ENCODE measurements at regions of chr3 and their contacts with region 1.

Region 1: DNA sequence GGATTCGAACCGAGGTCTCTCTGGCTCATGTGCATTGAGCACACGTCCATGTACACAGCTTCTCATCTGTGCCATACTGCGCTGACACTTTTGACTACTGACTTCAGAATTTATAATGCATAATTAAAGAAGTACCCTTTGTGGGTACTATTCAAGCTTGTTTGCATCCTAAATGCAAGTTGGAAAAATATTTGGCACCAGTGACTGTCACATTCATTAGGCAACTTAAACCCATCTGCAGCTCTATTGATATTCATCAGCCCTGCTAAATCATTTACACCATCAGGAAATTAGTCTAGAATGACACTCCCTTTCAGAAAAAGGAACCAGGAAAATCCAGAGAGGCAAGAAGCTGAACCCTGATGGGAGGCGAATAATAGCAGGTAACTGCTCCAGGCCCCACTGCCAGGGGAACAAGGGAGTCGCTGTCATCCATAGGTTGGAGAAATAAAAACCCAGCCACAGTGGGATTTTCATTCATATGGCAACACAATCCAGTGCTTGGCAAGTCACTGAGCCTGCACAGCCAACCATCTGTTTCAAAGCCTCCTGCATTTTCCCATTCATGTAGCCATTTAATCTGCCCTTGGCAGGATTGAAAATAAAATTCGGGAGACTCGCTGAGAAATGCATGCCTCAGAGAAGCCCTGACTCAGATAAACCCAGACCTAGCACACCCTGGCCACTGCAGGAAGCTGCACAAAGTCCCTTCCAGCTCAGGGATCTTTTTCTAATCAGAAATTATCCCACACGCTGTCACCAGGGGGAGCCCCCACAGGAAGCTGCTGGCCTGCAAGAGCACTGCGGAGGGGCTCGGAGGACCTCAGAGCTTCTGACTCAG is 103.0 kb upstream of the VEPH1 start:
- ATAC-seq: peak; percentile 95 to 99 (median 97)
- H3K4me3 ChIP-seq: no peak overlapping the region
- H3K27ac ChIP-seq: peak overlapping the region in 1 of 2 donors; percentile 2
- H3K4me1 ChIP-seq: peaks cover 0 to 2% of the 10 kb centered on the region in 2 donors

Region 2: GRCh38 chr3:157913741-157914150 is 307.5 kb after region 1 on chr3:
- in situ Hi-C with region 1: loop called in 2 of 9 experiments (anchors 25 kb)
- ATAC-seq: peak in 2 of 8 experiments; percentile 6 to 38
- H3K4me3 ChIP-seq: no peak overlapping the region
- H3K27ac ChIP-seq: no peak overlapping the region
- H3K4me1 ChIP-seq: peaks cover 20 to 29% of the 10 kb centered on the region in 2 donors

Region 3: DNA sequence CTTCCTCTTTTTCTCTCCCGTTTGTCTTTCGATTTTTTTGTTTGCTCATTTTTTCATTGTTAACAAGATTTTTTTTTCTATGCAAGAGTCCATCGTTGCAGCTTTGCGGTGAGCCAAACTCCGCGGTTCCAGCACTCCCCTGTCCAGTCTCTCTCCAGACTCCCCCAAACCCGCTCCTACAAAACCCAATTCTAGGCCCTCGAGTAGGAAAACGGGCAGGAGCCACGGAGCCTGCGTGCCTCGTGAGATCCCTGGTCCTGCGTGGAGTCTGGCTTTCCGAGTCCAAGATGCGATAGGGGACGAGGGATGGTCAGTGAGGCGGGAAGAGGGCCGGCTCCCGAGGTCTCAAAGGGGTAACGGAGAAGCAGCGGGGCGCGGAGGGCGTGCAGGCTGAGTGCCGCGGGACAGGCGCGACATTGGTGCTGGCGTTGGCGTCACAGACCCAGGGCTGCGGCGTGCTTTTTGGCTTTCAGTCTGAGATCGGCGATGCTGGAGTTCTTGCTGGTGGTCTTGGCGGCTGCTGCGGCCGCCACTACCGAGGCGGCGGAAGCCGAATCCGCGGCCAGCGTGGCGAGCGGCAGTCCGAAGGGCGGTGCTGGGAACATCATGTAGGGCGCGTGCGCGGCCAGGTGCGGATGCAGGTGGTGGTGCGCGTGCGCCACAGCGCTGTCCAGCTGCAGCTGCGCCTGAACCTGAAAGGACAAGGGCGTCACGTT is 491.5 kb after region 1 on chr3:
- in situ Hi-C with region 1: loop called in 4 of 9 experiments (anchors 25 kb)
- ATAC-seq: peak in 5 of 8 experiments; percentile 93 to 96 (median 95)
- H3K4me3 ChIP-seq: peak overlapping the region; percentile 39 to 60 (median 52)
- H3K27ac ChIP-seq: peak overlapping the region in 1 of 2 donors; percentile 65
- H3K4me1 ChIP-seq: peaks cover 3 to 4% of the 10 kb centered on the region in 2 donors

Region 4: DNA sequence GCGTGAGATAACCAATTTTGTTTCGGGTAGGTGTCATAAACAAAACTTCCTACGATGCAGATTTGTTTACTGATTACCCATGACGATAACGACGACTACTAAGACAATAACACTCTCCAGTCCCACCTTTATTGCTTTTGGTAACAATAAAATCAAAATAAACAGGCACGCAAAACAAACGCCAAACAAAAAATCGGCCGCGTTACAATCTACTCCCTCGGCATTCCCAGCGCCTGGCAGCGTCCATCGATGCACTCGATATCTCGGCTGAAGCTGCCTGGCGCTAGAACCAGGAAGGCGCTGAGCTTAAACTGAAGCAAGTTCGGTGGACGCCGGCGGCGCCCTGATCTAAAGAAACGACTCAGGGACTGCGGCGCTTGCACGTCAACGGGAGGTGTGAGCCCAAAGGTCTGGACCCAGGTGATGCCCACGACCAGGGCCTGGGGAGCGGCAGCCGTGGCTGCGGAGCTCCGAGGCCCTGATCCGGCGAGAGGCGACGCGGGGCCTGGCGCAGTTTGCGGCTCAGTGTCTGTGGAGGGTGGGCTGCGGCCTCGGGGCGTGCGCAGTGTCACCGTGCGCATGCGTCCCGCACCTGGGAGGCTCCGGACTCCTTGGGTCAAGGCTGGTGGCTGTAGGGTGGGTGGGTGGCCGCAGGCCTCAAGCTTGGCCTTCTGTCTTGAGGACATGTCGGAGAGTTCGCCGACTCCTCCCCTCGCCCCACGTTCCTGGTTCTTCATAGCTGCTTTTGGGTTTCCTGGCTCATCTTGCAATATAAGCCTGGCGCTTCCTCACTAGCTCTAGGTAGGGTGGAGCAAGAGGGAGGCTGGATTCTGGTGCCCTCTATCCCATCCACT is 503.8 kb after region 1 on chr3 and contains the start of gene RSRC1:
- in situ Hi-C with region 1: loop called in 2 of 9 experiments (anchors 25 kb)
- ATAC-seq: peak; percentile 47 to 95 (median 86)
- H3K4me3 ChIP-seq: peak within 1 kb of the TSS; percentile 74 to 97 (median 85)
- H3K27ac ChIP-seq: peak within 1 kb of the TSS; percentile 76 to 77
- H3K4me1 ChIP-seq: peaks cover 4 to 10% of the 10 kb centered on the region in 2 donors
- total RNA-seq, gene RSRC1: 38.3 to 159 (median 45.1) TPM

Region 5: GRCh38 chr3:158313338-158313927 is 707.2 kb after region 1 on chr3:
- in situ Hi-C with region 1: loop called in 2 of 9 experiments (anchors 25 kb)
- ATAC-seq: peak in 5 of 8 experiments; percentile 52 to 70 (median 55)
- H3K4me3 ChIP-seq: no peak overlapping the region
- H3K27ac ChIP-seq: no peak overlapping the region
- H3K4me1 ChIP-seq: peaks cover 0 to 3% of the 10 kb centered on the region in 2 donors

Region 6: DNA sequence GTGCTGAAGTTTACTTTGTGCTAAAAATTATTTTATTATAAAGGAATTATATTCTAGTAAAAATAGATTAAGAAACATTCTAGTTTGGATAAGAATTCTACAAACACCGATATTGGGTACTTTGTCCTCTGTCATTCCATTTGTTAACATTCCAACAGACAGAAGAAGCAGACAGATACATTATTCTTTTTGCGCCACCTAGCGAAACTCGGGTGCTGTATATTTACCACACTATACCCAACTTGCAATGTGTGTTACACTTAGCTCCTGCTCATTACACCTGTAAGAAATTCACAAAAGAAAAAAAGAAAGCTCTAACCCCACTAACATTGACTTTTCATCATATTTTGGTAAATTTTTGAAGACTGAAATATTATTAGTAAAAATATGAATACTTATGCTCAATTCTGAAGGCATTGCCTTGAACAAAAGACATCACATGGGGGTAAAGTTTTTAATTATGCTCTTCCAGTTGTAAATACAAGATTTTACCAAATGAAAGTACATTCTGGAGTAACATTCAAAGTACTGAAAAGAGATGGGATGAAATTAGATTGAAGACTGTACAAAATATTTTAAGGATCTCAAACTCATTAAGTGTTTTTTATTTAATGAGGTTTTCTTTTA is 828.3 kb after region 1 on chr3:
- in situ Hi-C with region 1: loop called in 2 of 9 experiments (anchors 25 kb)
- ATAC-seq: peak; percentile 58 to 97 (median 78)
- H3K4me3 ChIP-seq: no peak overlapping the region
- H3K27ac ChIP-seq: no peak overlapping the region
- H3K4me1 ChIP-seq: peaks cover 6% of the 10 kb centered on the region in 2 donors